GM12878 (cell line): ENCODE measurements at regions of chr20 and their contacts with region 1.

Region 1: GRCh38 chr20:17682103-17682888 is at the start of gene RRBP1:
- DNase-seq: peak; percentile 82
- ATAC-seq: peak; percentile 98
- H3K4me3 ChIP-seq: peak within 1 kb of the TSS; percentile 78
- H3K27ac ChIP-seq: peak within 1 kb of the TSS; percentile 78
- H3K4me1 ChIP-seq: peaks cover 8% of the 10 kb centered on the region
- H3K27me3 ChIP-seq: peaks cover 0 to 8% of the 10 kb centered on the region in 2 experiments; a peak in 1 of 4 replicates
- CTCF ChIP-seq: peak; percentile 66 to 88 (median 79)
- EP300 ChIP-seq: no peak
- POLR2A ChIP-seq: peak; percentile 96
- RAD21 ChIP-seq: peak; percentile 39; the same call in 1 of the 2 replicates
- polyA plus RNA-seq, gene RRBP1: 1.2 to 2.4 TPM

Region 2: GRCh38 chr20:17604852-17605660 is 77.2 kb before region 1 on chr20:
- CTCF ChIA-PET with region 1: no interaction called
- POLR2A ChIA-PET with region 1: no interaction called
- RAD21 ChIA-PET with region 1: no interaction called
- SMC1A ChIA-PET with region 1: no interaction called
- in situ Hi-C with region 1: no loop called
- intact Hi-C with region 1: no loop called
- DNase-seq: no peak
- ATAC-seq: no peak
- H3K4me3 ChIP-seq: no peak overlapping the region
- H3K27ac ChIP-seq: no peak overlapping the region
- H3K4me1 ChIP-seq: no peaks in the 10 kb centered on the region
- H3K27me3 ChIP-seq: no peaks in the 10 kb centered on the region
- CTCF ChIP-seq: no peak
- EP300 ChIP-seq: no peak
- POLR2A ChIP-seq: no peak
- RAD21 ChIP-seq: no peak

Region 3: GRCh38 chr20:17666481-17666880 is 15.8 kb before region 1 on chr20:
- CTCF ChIA-PET with region 1: interaction called, 23 read pairs
- POLR2A ChIA-PET with region 1: no interaction called
- RAD21 ChIA-PET with region 1: interaction called, 7 read pairs
- SMC1A ChIA-PET with region 1: interaction called, 4 read pairs
- in situ Hi-C with region 1: no loop called
- intact Hi-C with region 1: no loop called
- DNase-seq: no peak
- ATAC-seq: no peak
- H3K4me3 ChIP-seq: no peak overlapping the region
- H3K27ac ChIP-seq: no peak overlapping the region
- H3K4me1 ChIP-seq: peaks cover 13% of the 10 kb centered on the region
- H3K27me3 ChIP-seq: no peaks in the 10 kb centered on the region
- CTCF ChIP-seq: no peak
- EP300 ChIP-seq: no peak
- POLR2A ChIP-seq: no peak
- RAD21 ChIP-seq: no peak

Region 4: GRCh38 chr20:17854307-17854903 is 172.1 kb after region 1 on chr20:
- CTCF ChIA-PET with region 1: interaction called, 9 read pairs
- POLR2A ChIA-PET with region 1: interaction called, 7 read pairs
- RAD21 ChIA-PET with region 1: interaction called, 12 read pairs
- SMC1A ChIA-PET with region 1: interaction called, 3 read pairs
- in situ Hi-C with region 1: no loop called
- intact Hi-C with region 1: loop called (anchors 5 kb)
- DNase-seq: no peak
- ATAC-seq: peak; percentile 36
- H3K4me3 ChIP-seq: no peak overlapping the region
- H3K27ac ChIP-seq: peak overlapping the region; percentile 17; the same call in 1 of the 2 replicates
- H3K4me1 ChIP-seq: peaks cover 48% of the 10 kb centered on the region
- H3K27me3 ChIP-seq: no peaks in the 10 kb centered on the region
- CTCF ChIP-seq: no peak
- EP300 ChIP-seq: no peak
- POLR2A ChIP-seq: no peak
- RAD21 ChIP-seq: no peak

Region 5: DNA sequence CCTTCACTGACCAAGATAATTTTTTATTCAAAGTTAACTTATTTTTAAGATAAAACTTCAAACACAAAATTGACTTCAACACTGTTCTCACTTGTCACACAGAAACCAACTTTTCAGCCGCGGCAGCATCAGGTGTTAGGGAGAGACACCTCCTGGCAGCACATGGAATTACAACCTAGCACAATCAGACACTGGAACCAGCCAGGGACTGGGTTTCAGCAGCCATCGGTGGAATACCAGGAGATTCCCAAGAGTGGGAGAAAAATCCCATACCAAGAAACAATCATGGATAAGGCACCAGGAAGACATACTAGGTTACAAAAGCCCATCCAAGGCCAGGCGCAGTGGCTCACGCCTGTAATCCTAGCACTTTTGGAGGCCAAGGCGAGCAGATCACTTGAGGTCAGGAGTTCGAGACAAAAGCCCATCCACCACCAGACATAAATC is 216.3 kb after region 1 on chr20:
- CTCF ChIA-PET with region 1: interaction called, 31 read pairs
- POLR2A ChIA-PET with region 1: interaction called, 15 read pairs
- RAD21 ChIA-PET with region 1: interaction called, 44 read pairs
- SMC1A ChIA-PET with region 1: interaction called, 19 read pairs
- in situ Hi-C with region 1: loop called (anchors 5 kb)
- intact Hi-C with region 1: loop called (anchors 1 kb)
- DNase-seq: no peak
- ATAC-seq: peak; percentile 54
- H3K4me3 ChIP-seq: no peak overlapping the region
- H3K27ac ChIP-seq: no peak overlapping the region
- H3K4me1 ChIP-seq: peaks cover 35% of the 10 kb centered on the region
- H3K27me3 ChIP-seq: no peaks in the 10 kb centered on the region
- CTCF ChIP-seq: peak; percentile 89 to 94 (median 91)
- EP300 ChIP-seq: no peak
- POLR2A ChIP-seq: no peak
- RAD21 ChIP-seq: peak; percentile 100

Region 6: GRCh38 chr20:17938871-17939619 is 256.7 kb after region 1 on chr20:
- CTCF ChIA-PET with region 1: interaction called, 19 read pairs
- POLR2A ChIA-PET with region 1: no interaction called
- RAD21 ChIA-PET with region 1: interaction called, 14 read pairs
- SMC1A ChIA-PET with region 1: interaction called, 13 read pairs
- in situ Hi-C with region 1: no loop called
- intact Hi-C with region 1: loop called (anchors 1 kb)
- DNase-seq: no peak
- ATAC-seq: peak; percentile 92
- H3K4me3 ChIP-seq: no peak overlapping the region
- H3K27ac ChIP-seq: peak overlapping the region; percentile 38; the same call in 1 of the 2 replicates
- H3K4me1 ChIP-seq: peaks cover 23% of the 10 kb centered on the region
- H3K27me3 ChIP-seq: no peaks in the 10 kb centered on the region
- CTCF ChIP-seq: peak; percentile 97 to 99 (median 97)
- EP300 ChIP-seq: no peak
- POLR2A ChIP-seq: no peak
- RAD21 ChIP-seq: peak; percentile 94

Region 7: GRCh38 chr20:17995967-17996819 is 313.9 kb after region 1 on chr20:
- CTCF ChIA-PET with region 1: interaction called, 25 read pairs
- POLR2A ChIA-PET with region 1: interaction called, 3 read pairs
- RAD21 ChIA-PET with region 1: interaction called, 6 read pairs
- SMC1A ChIA-PET with region 1: interaction called, 3 read pairs
- in situ Hi-C with region 1: no loop called
- intact Hi-C with region 1: loop called (anchors 2 kb)
- DNase-seq: no peak
- ATAC-seq: peak; percentile 61
- H3K4me3 ChIP-seq: no peak overlapping the region
- H3K27ac ChIP-seq: no peak overlapping the region
- H3K4me1 ChIP-seq: peaks cover 21% of the 10 kb centered on the region
- H3K27me3 ChIP-seq: no peaks in the 10 kb centered on the region
- CTCF ChIP-seq: peak; percentile 97 to 99 (median 98)
- EP300 ChIP-seq: no peak
- POLR2A ChIP-seq: no peak
- RAD21 ChIP-seq: peak; percentile 99